ENCODE measurements at regions of chr2 and their contacts with region 1.

Region 1: GRCh38 chr2:216404010-216404618 is 8.2 kb upstream of the SMARCAL1 start:
- DNase-seq: peak in 1 of 2 experiments; percentile 69
- H3K4me3 ChIP-seq: no peak overlapping the region
- H3K27ac ChIP-seq: no peak overlapping the region
- H3K4me1 ChIP-seq: peaks cover 2 to 6% (median 3%) of the 10 kb centered on the region in 4 experiments; a peak in 6 of 7 replicates
- H3K27me3 ChIP-seq: no peaks in the 10 kb centered on the region
- CTCF ChIP-seq: peak; percentile 66 to 81 (median 77)
- EP300 ChIP-seq: no peak
- POLR2A ChIP-seq: no peak
- RAD21 ChIP-seq: peak; percentile 69 to 73

Region 2: DNA sequence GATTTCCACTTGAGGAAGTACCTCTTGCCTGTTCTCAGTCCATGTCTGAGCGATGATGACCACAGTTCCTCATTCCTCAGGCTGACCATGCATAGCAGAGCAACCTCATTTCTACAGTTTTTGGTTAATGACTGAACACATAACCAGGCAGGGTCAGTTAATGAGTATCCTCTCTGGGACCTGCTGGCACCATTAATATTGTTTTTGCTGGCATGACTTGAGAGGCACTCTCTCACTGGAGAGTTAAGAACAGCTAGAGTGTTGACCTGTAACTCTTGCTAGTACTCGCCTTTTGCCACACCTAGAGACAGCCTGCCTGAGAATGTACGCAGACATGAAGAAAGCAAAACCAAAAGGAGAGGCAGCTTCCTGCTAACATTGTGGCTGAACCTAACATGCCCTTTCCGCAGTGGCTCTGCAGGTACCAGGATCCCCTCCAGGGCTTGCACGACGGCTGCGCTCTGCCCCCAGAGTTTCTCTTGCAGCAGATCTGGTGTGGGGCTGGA is 346.4 kb before region 1 on chr2:
- CTCF ChIA-PET with region 1: no interaction called
- POLR2A ChIA-PET with region 1: no interaction called
- DNase-seq: no peak
- H3K4me3 ChIP-seq: no peak overlapping the region
- H3K27ac ChIP-seq: no peak overlapping the region
- H3K4me1 ChIP-seq: no peaks in the 10 kb centered on the region
- H3K27me3 ChIP-seq: no peaks in the 10 kb centered on the region
- CTCF ChIP-seq: no peak
- EP300 ChIP-seq: no peak
- POLR2A ChIP-seq: no peak
- RAD21 ChIP-seq: no peak

Region 3: DNA sequence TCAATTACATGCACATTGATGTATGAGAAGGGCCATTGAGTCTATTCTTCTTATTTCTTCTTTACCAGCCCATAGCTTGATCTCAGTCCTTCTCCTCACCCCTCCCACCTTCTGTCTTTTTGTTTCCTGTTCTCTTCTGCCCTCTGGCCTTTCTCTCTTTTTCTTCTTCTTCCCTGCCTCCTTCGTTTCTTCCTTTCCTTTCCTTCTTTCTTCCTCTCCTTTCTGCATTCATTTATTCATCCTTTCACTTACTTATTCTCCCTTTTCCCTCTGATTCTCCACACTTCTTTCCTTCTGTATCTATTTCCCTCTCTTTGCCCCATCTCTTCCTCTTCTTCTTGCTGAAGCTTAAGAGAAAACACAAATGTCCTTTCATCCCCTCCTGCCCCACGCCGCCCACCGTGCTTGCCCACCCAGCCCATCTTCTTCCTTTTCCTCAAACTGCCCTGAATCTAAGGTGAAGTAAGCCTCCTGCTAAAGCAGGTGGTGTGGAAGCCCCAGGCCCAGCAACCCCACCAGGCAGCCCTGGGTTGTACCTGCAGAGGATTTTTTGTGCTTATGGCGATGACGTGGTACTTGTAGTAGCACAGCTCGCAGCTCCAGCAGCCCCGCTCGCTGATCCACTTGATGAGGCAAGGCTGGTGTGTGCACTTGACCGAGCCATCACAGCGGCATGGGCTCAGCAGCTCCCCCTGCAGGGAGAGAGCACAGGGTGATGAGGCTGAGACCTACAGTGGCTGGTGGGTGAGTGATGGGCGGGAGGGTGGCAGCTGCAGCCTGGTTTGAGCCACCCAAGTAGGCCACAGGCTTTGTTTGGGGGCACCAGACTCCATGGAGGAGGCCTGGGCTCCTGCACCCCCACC is 120.8 kb before region 1 on chr2:
- CTCF ChIA-PET with region 1: interaction called, 49 read pairs
- POLR2A ChIA-PET with region 1: no interaction called
- DNase-seq: peak; percentile 83 to 95
- H3K4me3 ChIP-seq: no peak overlapping the region
- H3K27ac ChIP-seq: no peak overlapping the region
- H3K4me1 ChIP-seq: peaks cover 11 to 38% (median 18%) of the 10 kb centered on the region in 4 experiments
- H3K27me3 ChIP-seq: no peaks in the 10 kb centered on the region
- CTCF ChIP-seq: peak; percentile 88 to 100 (median 99)
- EP300 ChIP-seq: no peak
- POLR2A ChIP-seq: no peak
- RAD21 ChIP-seq: peak; percentile 76 to 83

Region 4: DNA sequence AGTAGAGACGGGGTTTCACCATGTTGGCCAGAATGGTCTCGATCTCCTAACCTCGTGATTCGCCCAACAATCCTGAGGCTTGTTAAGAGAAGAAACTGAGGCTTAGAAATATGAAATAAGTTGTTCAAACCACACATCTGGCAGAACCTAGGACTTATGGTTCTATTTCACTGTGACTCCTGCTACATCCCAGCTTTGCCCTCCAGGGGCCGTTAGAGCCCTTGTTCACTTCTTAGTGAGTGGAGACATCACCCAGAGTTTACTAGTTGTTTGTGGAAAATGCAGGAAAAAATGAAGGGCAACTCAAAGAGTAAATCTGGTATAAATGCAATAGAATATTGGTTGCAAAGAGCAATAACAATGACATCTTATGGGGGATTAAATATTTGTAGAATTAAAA is 75.8 kb before region 1 on chr2:
- CTCF ChIA-PET with region 1: interaction called, 45 read pairs
- POLR2A ChIA-PET with region 1: no interaction called
- DNase-seq: no peak
- H3K4me3 ChIP-seq: no peak overlapping the region
- H3K27ac ChIP-seq: no peak overlapping the region
- H3K4me1 ChIP-seq: peaks cover 0 to 4% (median 1%) of the 10 kb centered on the region in 4 experiments; a peak in 2 of 7 replicates
- H3K27me3 ChIP-seq: no peaks in the 10 kb centered on the region
- CTCF ChIP-seq: peak; percentile 17 to 63 (median 59)
- EP300 ChIP-seq: no peak
- POLR2A ChIP-seq: no peak
- RAD21 ChIP-seq: peak; percentile 78 to 83

Region 5: DNA sequence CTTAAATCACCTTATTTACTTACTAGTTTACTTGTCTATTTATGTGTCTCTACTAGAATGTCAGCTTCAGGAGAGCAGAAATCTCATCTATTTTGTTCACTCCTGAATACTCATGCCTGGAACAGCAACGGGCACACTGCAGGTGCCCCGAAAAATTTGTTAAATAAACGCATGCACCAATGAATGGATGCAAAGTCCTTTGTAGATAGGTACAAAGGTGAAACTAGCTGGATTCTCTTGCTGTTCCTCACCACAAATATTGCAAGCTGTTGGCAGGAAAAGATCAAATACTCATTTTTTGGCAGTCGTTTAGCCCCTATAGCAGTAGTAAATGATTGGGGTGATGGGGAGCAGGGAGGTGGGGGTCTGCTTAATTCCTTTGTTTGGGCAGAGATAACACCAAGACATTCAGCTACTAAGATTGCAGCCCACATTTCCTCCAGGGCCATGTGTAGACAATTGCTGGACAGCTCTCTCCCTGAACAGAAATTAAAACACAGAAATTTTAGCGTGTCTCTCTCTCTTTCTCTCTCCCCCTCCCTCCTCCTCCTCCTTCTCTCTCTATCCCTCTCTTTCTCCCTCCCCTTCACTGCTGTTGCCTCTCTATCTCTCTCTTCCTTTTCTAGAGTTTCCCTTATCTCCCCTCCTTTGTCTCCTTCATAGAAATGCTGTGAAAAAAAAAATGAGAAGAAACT is 37.2 kb before region 1 on chr2:
- CTCF ChIA-PET with region 1: interaction called, 24 read pairs
- POLR2A ChIA-PET with region 1: interaction called, 5 read pairs
- DNase-seq: no peak
- H3K4me3 ChIP-seq: no peak overlapping the region
- H3K27ac ChIP-seq: no peak overlapping the region
- H3K4me1 ChIP-seq: peaks cover 3 to 16% (median 4%) of the 10 kb centered on the region in 4 experiments; a peak in 5 of 7 replicates
- H3K27me3 ChIP-seq: peaks cover 0 to 3% (median 0%) of the 10 kb centered on the region in 4 experiments; a peak in 4 of 7 replicates
- CTCF ChIP-seq: no peak
- EP300 ChIP-seq: no peak
- POLR2A ChIP-seq: no peak
- RAD21 ChIP-seq: no peak

Region 6: GRCh38 chr2:216379977-216380376 is 24.1 kb before region 1 on chr2:
- CTCF ChIA-PET with region 1: interaction called, 79 read pairs
- POLR2A ChIA-PET with region 1: no interaction called
- DNase-seq: no peak
- H3K4me3 ChIP-seq: no peak overlapping the region
- H3K27ac ChIP-seq: no peak overlapping the region
- H3K4me1 ChIP-seq: no peaks in the 10 kb centered on the region
- H3K27me3 ChIP-seq: no peaks in the 10 kb centered on the region; a peak in 1 of 7 replicates
- CTCF ChIP-seq: no peak
- EP300 ChIP-seq: no peak
- POLR2A ChIP-seq: no peak
- RAD21 ChIP-seq: no peak

Region 7: DNA sequence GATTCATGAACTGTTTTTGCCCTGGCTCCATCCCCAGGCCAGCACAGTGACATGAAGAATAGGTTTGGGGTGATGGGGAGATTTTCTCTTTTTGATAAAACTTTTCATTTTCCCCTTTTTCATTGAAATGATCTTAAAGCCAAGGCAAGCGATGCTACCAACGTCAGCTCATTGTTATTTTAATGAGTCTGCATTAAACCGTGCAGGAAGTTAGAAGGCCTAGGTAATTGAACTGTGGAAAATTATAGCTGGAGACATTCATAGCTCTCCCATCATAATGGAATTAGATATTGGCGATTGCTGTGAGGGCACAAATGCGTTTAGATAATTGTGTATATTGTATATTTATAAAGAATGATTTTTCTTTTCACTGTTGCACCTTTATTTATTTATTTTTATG is 41.4 kb after region 1 on chr2:
- CTCF ChIA-PET with region 1: interaction called, 14 read pairs
- POLR2A ChIA-PET with region 1: no interaction called
- DNase-seq: no peak
- H3K4me3 ChIP-seq: no peak overlapping the region
- H3K27ac ChIP-seq: no peak overlapping the region
- H3K4me1 ChIP-seq: peaks cover 0 to 5% (median 2%) of the 10 kb centered on the region in 4 experiments; a peak in 2 of 7 replicates
- H3K27me3 ChIP-seq: peaks cover 0 to 2% (median 0%) of the 10 kb centered on the region in 4 experiments; a peak in 1 of 7 replicates
- CTCF ChIP-seq: no peak
- EP300 ChIP-seq: no peak
- POLR2A ChIP-seq: no peak
- RAD21 ChIP-seq: no peak

Region 8: GRCh38 chr2:216474925-216475670 is 71.0 kb after region 1 on chr2:
- CTCF ChIA-PET with region 1: no interaction called
- POLR2A ChIA-PET with region 1: no interaction called
- DNase-seq: no peak
- H3K4me3 ChIP-seq: no peak overlapping the region
- H3K27ac ChIP-seq: no peak overlapping the region
- H3K4me1 ChIP-seq: no peaks in the 10 kb centered on the region
- H3K27me3 ChIP-seq: no peaks in the 10 kb centered on the region
- CTCF ChIP-seq: no peak
- EP300 ChIP-seq: no peak
- POLR2A ChIP-seq: no peak
- RAD21 ChIP-seq: no peak